ENCODE measurements at regions of chr11 and their contacts with region 1.

Region 1: DNA sequence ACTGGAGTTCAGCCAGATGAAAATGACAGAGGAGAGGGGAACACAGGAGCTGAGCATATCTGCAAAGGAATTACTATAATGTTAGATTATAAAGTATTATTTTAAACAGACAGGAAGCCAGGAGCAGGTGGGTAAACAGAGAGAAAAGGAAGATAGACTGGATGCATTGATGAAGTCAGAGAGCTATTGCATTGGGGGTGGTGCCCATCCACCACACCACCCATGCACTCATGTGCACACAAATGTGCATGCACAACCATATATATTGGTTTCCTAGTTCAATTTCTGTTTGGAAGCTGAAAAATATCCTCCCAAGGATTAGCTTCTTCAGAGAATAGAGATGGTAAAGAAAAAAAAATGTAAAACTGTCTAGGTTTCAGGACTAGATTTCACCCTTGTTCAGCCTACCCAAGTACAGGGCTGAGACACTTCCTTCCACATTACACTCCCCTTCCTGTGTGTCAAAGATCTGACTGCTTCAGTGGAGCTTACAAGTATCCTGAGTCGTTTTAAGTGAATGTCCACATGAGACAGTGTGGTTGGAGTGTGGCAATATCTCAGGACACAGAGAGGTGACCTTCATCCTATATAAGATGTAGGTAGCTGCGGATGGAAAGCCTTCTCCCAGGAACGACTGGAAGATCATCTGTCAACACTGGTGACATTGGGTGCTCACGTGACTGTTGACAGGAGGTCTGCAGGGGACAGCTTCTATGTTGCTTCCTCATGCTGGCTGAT is 12.2 kb upstream of the SMPD1 start:
- DNase-seq: no peak
- ATAC-seq: no peak
- H3K4me3 Mint-ChIP-seq: no peak overlapping the region
- H3K27ac Mint-ChIP-seq: no peak overlapping the region
- H3K4me1 Mint-ChIP-seq: peaks cover 13% of the 10 kb centered on the region
- H3K27me3 Mint-ChIP-seq: no peaks in the 10 kb centered on the region
- CTCF ChIP-seq: no peak

Region 2: GRCh38 chr11:6389921-6390724 is 12.1 kb after region 1 on chr11 and contains the start of gene SMPD1:
- CTCF ChIA-PET with region 1: interaction called, 57 read pairs
- POLR2A ChIA-PET with region 1: interaction called, 5 read pairs
- DNase-seq: peak; percentile 87
- ATAC-seq: peak; percentile 87
- H3K4me3 Mint-ChIP-seq: peak within 1 kb of the TSS; percentile 92
- H3K27ac Mint-ChIP-seq: peak within 1 kb of the TSS; percentile 96
- H3K4me1 Mint-ChIP-seq: peaks cover 32% of the 10 kb centered on the region
- H3K27me3 Mint-ChIP-seq: peaks cover 13% of the 10 kb centered on the region
- CTCF ChIP-seq: no peak
- total RNA-seq, gene SMPD1: 4.4 to 6.6 TPM (median 5.6 TPM) in 3 replicates

Region 3: DNA sequence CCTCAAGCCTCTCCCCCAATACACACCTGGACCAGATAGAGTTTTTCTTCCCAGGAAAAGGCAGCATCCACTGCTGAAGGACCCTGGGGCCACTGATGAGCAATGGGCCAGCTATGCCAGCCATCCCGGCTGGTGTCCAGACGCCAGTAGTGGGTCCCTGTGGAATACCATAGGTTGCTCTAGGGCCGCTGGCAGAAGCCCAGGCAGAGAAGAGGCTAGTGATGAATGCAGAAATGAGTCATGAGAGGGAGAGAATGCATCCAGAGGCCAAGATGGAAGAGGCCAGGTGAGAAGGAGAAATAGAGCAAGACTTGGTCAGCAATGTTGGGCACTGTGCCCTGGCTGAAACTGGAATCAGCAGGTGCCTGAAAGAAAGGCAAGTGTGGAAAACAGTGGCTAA is 53.8 kb after region 1 on chr11:
- CTCF ChIA-PET with region 1: interaction called, 342 read pairs
- POLR2A ChIA-PET with region 1: no interaction called
- DNase-seq: no peak
- ATAC-seq: no peak
- H3K4me3 Mint-ChIP-seq: no peak overlapping the region
- H3K27ac Mint-ChIP-seq: no peak overlapping the region
- H3K4me1 Mint-ChIP-seq: peaks cover 7% of the 10 kb centered on the region
- H3K27me3 Mint-ChIP-seq: peaks cover 8% of the 10 kb centered on the region
- CTCF ChIP-seq: no peak

Region 4: GRCh38 chr11:6481012-6481923 is 103.2 kb after region 1 on chr11 and contains the starts of genes ARFIP2 and TIMM10B:
- CTCF ChIA-PET with region 1: interaction called, 68 read pairs
- POLR2A ChIA-PET with region 1: interaction called, 7 read pairs
- DNase-seq: peak; percentile 97
- ATAC-seq: peak; percentile 94
- H3K4me3 Mint-ChIP-seq: peak within 1 kb of the TSS; percentile 98
- H3K27ac Mint-ChIP-seq: peak within 1 kb of the TSS; percentile 99
- H3K4me1 Mint-ChIP-seq: peaks cover 18% of the 10 kb centered on the region
- H3K27me3 Mint-ChIP-seq: no peaks in the 10 kb centered on the region
- CTCF ChIP-seq: no peak
- total RNA-seq, gene ARFIP2: 46.0 to 53.1 TPM (median 46.1 TPM) in 3 replicates
- total RNA-seq, gene TIMM10B: 35.8 to 42.6 TPM (median 36.1 TPM) in 3 replicates

Region 5: GRCh38 chr11:6520265-6520664 is 142.2 kb after region 1 on chr11:
- CTCF ChIA-PET with region 1: interaction called, 13 read pairs
- POLR2A ChIA-PET with region 1: interaction called, 3 read pairs
- DNase-seq: no peak
- ATAC-seq: no peak
- H3K4me3 Mint-ChIP-seq: no peak overlapping the region
- H3K27ac Mint-ChIP-seq: no peak overlapping the region
- H3K4me1 Mint-ChIP-seq: no peaks in the 10 kb centered on the region
- H3K27me3 Mint-ChIP-seq: no peaks in the 10 kb centered on the region; the same call in 1 of the 2 replicates
- CTCF ChIP-seq: no peak

Region 6: DNA sequence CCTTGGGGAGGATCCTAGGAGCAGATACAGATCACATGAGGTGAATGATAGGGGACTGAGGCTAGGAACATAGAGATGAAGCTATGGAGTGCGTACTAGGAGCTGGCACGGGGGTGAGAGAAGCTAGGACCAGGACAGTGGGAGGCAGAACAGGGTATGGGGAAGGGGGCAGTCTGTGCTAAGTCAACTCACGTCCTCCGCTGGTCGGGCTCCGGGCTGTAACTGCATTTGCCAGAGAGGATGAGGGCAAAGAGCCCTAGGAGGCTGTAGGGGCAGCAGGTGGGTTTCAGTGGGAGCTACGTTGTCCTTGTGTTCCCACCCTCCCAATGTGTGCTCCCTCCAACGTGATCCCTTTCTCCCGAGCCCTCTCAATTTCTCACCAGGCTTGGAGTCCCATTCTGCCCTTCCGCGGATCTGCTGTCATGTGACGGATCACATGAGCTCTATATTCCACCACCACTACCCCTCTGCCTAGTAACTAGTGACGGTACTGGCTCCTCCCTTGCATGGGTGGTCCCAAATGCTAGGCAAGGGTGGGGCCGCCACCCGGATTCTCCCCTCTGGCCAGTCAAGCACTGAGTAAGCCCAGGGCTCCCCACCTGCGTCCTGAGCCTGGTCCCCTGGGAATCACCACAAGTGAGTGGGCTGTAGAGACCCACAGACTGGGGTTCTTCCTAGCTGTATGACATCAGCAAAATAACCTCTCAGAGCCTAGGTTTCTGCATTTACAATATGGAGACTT is 241.1 kb after region 1 on chr11 and contains the start of gene TPP1:
- CTCF ChIA-PET with region 1: interaction called, 12 read pairs
- POLR2A ChIA-PET with region 1: no interaction called
- DNase-seq: peak; percentile 92
- ATAC-seq: peak; percentile 99
- H3K4me3 Mint-ChIP-seq: no peak within 1 kb of the TSS
- H3K27ac Mint-ChIP-seq: no peak within 1 kb of the TSS
- H3K4me1 Mint-ChIP-seq: no peaks in the 10 kb centered on the region
- H3K27me3 Mint-ChIP-seq: no peaks in the 10 kb centered on the region
- CTCF ChIP-seq: no peak
- total RNA-seq, gene TPP1: 36.2 to 51.4 TPM (median 44.8 TPM) in 3 replicates

Region 7: GRCh38 chr11:6705905-6706535 is 327.9 kb after region 1 on chr11:
- CTCF ChIA-PET with region 1: interaction called, 12 read pairs
- POLR2A ChIA-PET with region 1: no interaction called
- DNase-seq: peak; percentile 44
- ATAC-seq: peak; percentile 68
- H3K4me3 Mint-ChIP-seq: no peak overlapping the region
- H3K27ac Mint-ChIP-seq: no peak overlapping the region
- H3K4me1 Mint-ChIP-seq: peaks cover 16% of the 10 kb centered on the region
- H3K27me3 Mint-ChIP-seq: peaks cover 8% of the 10 kb centered on the region; the same call in 1 of the 2 replicates
- CTCF ChIP-seq: peak; percentile 69